T-cell (primary cell): ENCODE measurements at regions of chr5 and their contacts with region 1.

Region 1: GRCh38 chr5:50727149-50727496 is 60.7 kb downstream of the PARP8 start:
- DNase-seq: peak in 1 of 35 experiments; percentile 2
- ATAC-seq: peak; percentile 63 to 88 (median 82)
- H3K4me3 ChIP-seq: no peak overlapping the region
- H3K4me3 Mint-ChIP-seq: peak overlapping the region in 2 of 3 donors; percentile 8 to 46
- H3K27ac ChIP-seq: peak overlapping the region; percentile 13
- H3K27ac Mint-ChIP-seq: peak overlapping the region; percentile 80 to 81
- H3K4me1 ChIP-seq: peaks cover 9 to 12% of the 10 kb centered on the region in 2 experiments
- H3K4me1 Mint-ChIP-seq: peaks cover 65 to 81% (median 81%) of the 10 kb centered on the region in 3 donors
- H3K27me3 ChIP-seq: no peaks in the 10 kb centered on the region
- H3K27me3 Mint-ChIP-seq: no peaks in the 10 kb centered on the region

Region 2: DNA sequence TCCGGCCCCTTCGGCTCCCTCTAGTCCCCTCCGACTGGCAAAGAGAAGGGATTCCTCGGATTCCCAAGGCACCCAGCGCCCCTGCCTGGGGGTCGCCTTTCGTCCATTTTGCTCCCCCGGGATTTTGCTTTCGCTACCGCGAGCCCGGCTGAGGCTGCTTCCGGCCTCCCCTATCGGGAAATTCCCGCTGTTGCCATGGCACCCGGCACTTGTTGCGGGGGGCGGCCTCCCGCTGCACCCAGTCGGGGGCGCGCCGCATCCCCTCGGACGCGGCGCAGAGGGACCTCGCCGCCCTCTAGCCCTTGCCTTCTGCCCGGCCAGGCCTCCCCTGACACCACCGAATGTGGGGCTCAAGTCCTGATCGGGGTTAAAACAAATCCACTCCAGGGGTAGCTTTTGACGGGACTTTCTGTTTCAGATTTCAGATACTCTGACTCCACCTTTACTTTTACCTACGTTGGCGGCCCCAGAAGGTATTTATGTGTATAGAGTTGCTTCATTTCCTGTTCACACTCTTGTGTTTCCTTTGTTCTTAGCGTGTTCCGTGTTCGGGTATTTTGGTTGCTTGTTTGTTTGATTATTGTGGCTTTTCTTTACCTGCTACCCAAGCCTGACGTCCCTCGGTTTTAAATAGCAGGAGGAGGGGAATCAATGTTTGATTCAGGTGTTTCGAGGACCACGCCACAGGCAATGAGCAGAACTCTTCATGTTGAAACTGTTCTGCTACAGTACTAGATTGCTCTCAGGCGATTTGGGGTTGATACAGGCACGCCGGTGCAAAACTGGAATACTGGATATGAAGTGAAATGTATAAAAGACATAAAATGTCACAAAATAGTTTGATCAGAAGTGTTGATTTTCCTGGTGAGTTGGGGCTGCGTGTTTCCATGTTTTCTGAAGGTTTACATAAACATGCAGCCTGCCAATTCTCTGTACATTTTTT is 59.2 kb before region 1 on chr5:
- CTCF ChIA-PET with region 1: interaction called in 1 of 2 experiments, 3 read pairs
- POLR2A ChIA-PET with region 1: interaction called, 3 to 12 read pairs
- DNase-seq: peak; percentile 75 to 92 (median 84)
- ATAC-seq: peak; percentile 70 to 83 (median 74)
- H3K4me3 ChIP-seq: peak overlapping the region; percentile 90 to 98
- H3K4me3 Mint-ChIP-seq: peak overlapping the region; percentile 96 to 99 (median 99)
- H3K27ac ChIP-seq: peak overlapping the region; percentile 100
- H3K27ac Mint-ChIP-seq: peak overlapping the region; percentile 100
- H3K4me1 ChIP-seq: peaks cover 31 to 33% of the 10 kb centered on the region in 2 experiments
- H3K4me1 Mint-ChIP-seq: peaks cover 65 to 73% (median 70%) of the 10 kb centered on the region in 3 donors
- H3K27me3 ChIP-seq: no peaks in the 10 kb centered on the region
- H3K27me3 Mint-ChIP-seq: no peaks in the 10 kb centered on the region

Region 3: GRCh38 chr5:50807661-50808060 is 80.5 kb after region 1 on chr5:
- CTCF ChIA-PET with region 1: no interaction called
- POLR2A ChIA-PET with region 1: no interaction called
- DNase-seq: no peak
- ATAC-seq: no peak
- H3K4me3 ChIP-seq: no peak overlapping the region
- H3K4me3 Mint-ChIP-seq: no peak overlapping the region
- H3K27ac ChIP-seq: no peak overlapping the region
- H3K27ac Mint-ChIP-seq: peak overlapping the region in 1 of 2 donors; percentile 25
- H3K4me1 ChIP-seq: peaks cover 0 to 2% of the 10 kb centered on the region in 2 experiments
- H3K4me1 Mint-ChIP-seq: peaks cover 38 to 54% (median 48%) of the 10 kb centered on the region in 3 donors
- H3K27me3 ChIP-seq: no peaks in the 10 kb centered on the region
- H3K27me3 Mint-ChIP-seq: no peaks in the 10 kb centered on the region

Region 4: DNA sequence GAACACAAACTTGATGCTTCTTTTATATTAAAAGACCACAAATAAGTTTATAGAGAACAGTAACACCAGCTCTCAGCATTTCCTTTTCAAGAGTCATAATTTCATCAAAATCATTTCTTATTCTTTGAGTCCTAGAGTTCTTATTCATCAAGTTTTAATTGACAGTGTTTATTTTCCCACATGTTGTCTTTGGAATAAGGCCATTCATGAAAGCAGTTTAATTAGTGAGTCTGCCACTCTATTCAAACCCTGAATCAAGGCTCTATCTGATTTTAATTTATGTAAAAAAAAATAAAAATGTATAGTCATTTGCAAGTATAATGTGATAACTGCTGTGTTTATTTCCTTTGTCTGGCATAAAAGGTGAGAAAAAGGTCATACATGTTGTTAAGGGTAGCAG is 116.0 kb after region 1 on chr5:
- CTCF ChIA-PET with region 1: no interaction called
- POLR2A ChIA-PET with region 1: no interaction called
- DNase-seq: no peak
- ATAC-seq: no peak
- H3K4me3 ChIP-seq: no peak overlapping the region
- H3K4me3 Mint-ChIP-seq: no peak overlapping the region
- H3K27ac ChIP-seq: no peak overlapping the region
- H3K27ac Mint-ChIP-seq: no peak overlapping the region
- H3K4me1 ChIP-seq: no peaks in the 10 kb centered on the region
- H3K4me1 Mint-ChIP-seq: no peaks in the 10 kb centered on the region
- H3K27me3 ChIP-seq: no peaks in the 10 kb centered on the region
- H3K27me3 Mint-ChIP-seq: no peaks in the 10 kb centered on the region